GM10248 (cell line): ENCODE measurements at regions of chr3 and their contacts with region 1.

Region 1: DNA sequence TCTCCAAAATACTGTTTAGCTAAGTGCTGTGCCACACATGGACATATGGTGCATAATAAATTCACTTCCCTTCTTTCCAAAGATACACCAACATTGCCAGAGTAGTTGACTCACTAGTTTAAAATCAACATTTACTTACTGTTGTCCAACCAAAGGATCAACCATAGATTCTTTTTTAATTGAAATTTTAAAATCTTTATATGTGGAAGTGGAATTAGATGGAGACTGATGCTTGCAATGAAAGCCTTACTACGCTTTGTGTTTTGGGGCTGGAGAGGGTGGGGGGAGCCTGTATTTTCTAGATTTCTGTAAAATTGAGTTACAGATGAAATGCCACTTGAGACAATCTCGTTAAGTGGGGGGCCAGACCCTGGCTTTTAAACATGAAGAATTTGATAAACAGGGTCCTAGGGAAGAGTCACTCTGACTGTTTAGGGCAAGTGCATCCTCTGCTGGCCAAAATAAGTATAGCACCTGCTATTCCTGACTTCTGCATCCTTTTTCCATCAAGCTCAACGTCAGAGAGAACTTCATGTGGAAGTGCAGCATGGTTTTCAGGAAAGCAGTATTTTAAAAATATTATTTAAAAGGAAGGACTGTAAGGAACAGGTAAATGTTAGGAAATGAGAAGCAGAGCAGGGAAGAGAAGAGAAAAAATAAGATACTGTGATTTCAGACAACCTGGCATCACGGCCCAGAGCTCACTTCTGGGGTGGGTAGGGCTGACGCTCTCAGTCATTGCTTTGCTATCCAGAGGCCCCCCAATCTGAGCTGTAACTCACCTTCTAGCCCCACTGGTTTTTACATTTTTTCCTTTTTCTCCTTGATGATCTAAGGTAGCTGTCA is 76.7 kb downstream of the BOC start:
- DNase-seq: peak; percentile 65
- CTCF ChIP-seq: peak; percentile 90

Region 2: GRCh38 chr3:112642912-112643506 is 645.0 kb before region 1 on chr3:
- CTCF ChIA-PET with region 1: interaction called, 23 read pairs
- POLR2A ChIA-PET with region 1: no interaction called
- DNase-seq: peak; percentile 81
- CTCF ChIP-seq: peak; percentile 81

Region 3: GRCh38 chr3:113043686-113044085 is 244.3 kb before region 1 on chr3:
- CTCF ChIA-PET with region 1: interaction called, 17 read pairs
- POLR2A ChIA-PET with region 1: no interaction called
- DNase-seq: no peak
- CTCF ChIP-seq: no peak

Region 4: GRCh38 chr3:113057117-113057516 is 230.9 kb before region 1 on chr3:
- CTCF ChIA-PET with region 1: interaction called, 25 read pairs
- POLR2A ChIA-PET with region 1: no interaction called
- DNase-seq: peak; percentile 39
- CTCF ChIP-seq: no peak

Region 5: DNA sequence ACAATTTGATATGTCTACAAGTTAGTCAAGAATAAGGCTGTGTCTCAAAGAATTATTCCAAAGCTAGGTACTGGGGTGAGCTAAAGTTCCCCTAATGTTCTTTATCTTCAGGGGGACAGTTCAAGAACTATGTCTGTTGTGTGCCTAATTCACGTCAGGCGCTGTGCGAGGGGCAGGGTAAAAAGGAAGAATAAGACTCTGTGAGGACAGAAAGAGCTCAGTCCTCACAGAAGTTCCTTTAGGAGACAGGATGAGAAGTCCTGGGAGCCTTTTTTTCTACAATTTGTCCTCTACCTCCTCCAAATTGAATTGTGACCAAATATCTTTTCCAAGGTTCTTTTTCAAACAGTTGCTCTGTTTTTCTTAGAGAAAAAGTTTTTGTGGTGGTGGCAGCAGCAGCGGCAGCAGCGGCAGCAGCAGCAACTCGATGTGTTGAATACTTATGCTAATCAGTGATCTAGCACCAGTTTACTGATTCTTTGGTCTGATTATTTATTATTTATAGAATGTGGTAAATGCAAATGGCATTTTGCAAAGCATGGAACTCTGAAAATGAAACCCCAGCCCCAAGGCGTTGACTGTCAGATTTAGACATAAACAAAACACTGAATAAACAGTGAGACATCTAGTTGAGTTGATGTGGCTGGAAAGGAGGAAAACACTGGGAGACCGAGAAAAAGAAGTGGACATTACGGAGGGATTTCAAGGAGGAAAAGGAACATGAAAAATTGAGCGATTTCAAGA is 208.6 kb before region 1 on chr3:
- CTCF ChIA-PET with region 1: interaction called, 10 read pairs
- POLR2A ChIA-PET with region 1: no interaction called
- DNase-seq: peak; percentile 42
- CTCF ChIP-seq: no peak

Region 6: DNA sequence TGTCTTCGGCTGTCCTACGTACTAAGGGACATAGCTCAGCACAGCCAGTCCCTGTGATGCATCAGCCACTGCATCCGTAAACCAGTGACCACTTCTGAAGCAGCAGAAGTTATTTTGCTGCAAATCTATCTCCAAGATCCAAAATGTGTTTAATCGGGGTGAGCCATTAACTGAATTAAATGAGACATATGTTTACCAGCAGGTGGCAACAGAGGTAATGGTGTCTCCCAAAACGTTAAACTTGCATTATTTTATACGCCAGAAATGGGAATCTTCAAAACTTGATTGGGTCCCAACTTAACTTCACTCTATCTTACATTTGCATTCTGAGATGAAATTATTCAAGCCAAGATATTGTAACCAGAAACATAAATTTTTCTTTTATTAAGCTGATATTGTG is 152.0 kb before region 1 on chr3:
- CTCF ChIA-PET with region 1: interaction called, 12 read pairs
- POLR2A ChIA-PET with region 1: no interaction called
- DNase-seq: no peak
- CTCF ChIP-seq: peak; percentile 24

Region 7: DNA sequence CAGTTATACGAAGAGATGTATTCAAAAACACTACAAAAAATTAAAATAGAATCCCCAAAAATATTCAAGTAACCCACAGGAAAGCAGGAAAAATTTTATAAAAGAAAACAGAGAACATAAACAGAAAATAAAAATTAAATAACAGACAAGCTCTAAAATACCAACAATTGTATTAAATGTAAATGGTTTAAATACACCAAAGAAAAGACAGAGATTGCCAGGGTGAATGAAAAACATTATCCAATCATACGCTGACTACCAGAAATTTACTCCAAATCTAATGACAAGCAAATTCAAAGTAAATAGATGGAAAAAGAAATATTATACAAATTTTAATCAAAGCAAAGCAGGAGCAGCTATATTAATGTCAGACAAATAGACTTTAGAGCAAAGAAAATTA is 26.9 kb after region 1 on chr3:
- CTCF ChIA-PET with region 1: interaction called, 10 read pairs
- POLR2A ChIA-PET with region 1: no interaction called
- DNase-seq: no peak
- CTCF ChIP-seq: no peak